Stomach (tissue), 19 donors: ENCODE measurements at regions of chr3 and their contacts with region 1.

Region 1: DNA sequence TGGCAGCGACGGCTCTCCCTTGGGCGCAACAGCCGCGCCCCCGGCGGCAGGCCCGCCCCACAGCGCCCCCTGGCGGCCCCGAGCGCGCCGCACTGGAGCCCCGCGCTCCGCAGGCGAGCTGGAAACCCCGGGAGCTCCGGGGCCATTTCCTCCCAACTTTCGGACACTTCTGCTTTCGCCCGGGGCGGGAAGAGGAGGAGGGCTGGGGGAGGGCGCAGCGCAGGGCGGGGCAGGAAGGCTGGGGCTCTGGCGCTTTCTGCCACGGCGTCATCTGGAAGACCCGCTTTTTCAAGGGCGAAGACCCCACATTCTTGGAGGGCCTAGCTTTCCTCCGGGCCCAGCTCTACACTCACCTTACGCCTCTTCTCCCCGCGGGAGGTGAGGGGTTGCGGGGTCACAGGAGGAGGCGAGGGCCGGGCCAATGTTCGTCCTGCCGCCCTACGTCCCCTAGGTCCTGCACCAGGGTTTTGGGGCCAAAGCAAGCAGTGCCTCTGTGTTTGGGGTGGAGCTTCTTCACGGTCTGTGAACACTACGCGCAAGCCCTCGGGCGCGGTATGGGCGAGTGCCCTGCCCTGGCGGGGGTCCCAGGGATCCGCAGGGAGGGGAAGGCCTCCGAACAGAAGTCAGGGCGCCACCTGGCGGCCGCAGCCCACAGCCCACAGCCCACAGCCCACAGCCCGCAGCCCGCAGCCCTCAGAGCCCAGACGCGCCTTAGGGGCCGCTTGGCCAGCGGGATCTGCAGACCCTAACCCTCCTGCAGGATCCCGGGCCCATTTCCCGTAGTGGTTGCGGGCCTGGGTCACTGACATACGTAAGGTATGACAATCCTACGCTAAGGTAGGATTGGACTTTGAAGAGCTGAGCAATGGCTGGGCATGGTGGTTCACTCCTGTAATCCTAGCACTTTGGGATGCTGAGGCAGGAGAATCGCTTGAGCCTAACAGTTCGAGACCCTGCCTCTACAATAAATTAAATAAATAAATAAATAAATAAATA is 31.1 kb downstream of the FOXL2 start:
- DNase-seq: peak; percentile 94 to 97
- H3K4me3 ChIP-seq: peak overlapping the region; percentile 53 to 74 (median 70)
- H3K27ac ChIP-seq: peak overlapping the region; percentile 89 to 98 (median 94)
- H3K4me1 ChIP-seq: peaks cover 10 to 22% (median 16%) of the 10 kb centered on the region in 4 donors
- H3K27me3 ChIP-seq: no peaks in the 10 kb centered on the region
- CTCF ChIP-seq: peak in 6 of 7 experiments; percentile 11 to 96 (median 94)
- EP300 ChIP-seq: no peak
- POLR2A ChIP-seq: no peak

Region 2: GRCh38 chr3:138600100-138600745 is 315.6 kb before region 1 on chr3:
- intact Hi-C with region 1: loop called (anchors 5 kb)
- DNase-seq: no peak
- H3K4me3 ChIP-seq: no peak overlapping the region
- H3K27ac ChIP-seq: no peak overlapping the region
- H3K4me1 ChIP-seq: peaks cover 0 to 4% (median 0%) of the 10 kb centered on the region in 4 donors
- H3K27me3 ChIP-seq: no peaks in the 10 kb centered on the region
- CTCF ChIP-seq: no peak
- EP300 ChIP-seq: no peak
- POLR2A ChIP-seq: no peak

Region 3: DNA sequence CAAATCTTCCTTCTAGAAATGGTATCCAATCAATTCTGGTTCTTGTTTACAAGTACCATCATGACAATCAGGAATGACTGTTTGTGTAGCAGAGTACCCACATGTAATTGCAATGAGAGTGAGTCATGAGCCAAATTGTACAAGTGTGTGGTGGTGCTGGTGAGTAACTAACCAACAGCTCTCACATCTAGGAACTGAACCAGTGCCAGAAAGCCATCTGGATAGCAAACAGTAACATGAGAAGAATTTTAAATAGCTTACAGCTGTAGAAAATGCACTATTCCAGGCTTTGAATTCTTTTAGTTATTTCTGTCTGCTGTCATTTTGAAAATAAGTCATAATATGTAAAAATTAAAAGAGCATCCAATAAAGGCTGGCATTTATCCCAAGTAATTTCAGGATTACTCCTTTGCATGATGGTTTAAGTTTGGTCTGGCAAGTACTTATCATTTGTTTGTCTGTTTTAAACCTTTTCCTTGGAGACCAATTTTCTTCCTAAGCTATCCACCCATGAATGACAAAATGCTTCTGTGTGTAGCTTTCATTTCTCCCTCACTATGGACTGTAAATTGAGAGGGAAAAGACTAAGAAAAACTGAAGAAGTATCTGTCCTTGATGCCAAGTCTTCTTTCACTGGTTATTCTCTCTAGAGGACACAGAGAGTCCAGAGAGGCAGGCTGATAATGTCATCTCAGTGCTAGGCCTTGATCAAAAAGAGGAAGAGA is 141.1 kb before region 1 on chr3:
- intact Hi-C with region 1: no loop called
- DNase-seq: peak; percentile 60 to 93
- H3K4me3 ChIP-seq: no peak overlapping the region
- H3K27ac ChIP-seq: peak overlapping the region in 4 of 5 donors; percentile 51 to 75 (median 56)
- H3K4me1 ChIP-seq: peaks cover 15 to 25% (median 18%) of the 10 kb centered on the region in 4 donors
- H3K27me3 ChIP-seq: no peaks in the 10 kb centered on the region
- CTCF ChIP-seq: no peak
- EP300 ChIP-seq: no peak
- POLR2A ChIP-seq: no peak

Region 4: GRCh38 chr3:138834359-138835212 is 81.2 kb before region 1 on chr3 and contains the start of gene PIK3CB:
- intact Hi-C with region 1: loop called (anchors 10 kb)
- DNase-seq: peak; percentile 92 to 96
- H3K4me3 ChIP-seq: peak within 1 kb of the TSS; percentile 72 to 95 (median 84)
- H3K27ac ChIP-seq: peak within 1 kb of the TSS; percentile 89 to 94 (median 92)
- H3K4me1 ChIP-seq: peaks cover 11 to 32% (median 24%) of the 10 kb centered on the region in 4 donors
- H3K27me3 ChIP-seq: no peaks in the 10 kb centered on the region
- CTCF ChIP-seq: peak in 2 of 7 experiments; percentile 27 to 41
- EP300 ChIP-seq: no peak
- POLR2A ChIP-seq: no peak
- total RNA-seq, gene PIK3CB: 2.9 to 43.7 (median 11.6) TPM